ENCODE measurements at regions of chr14 and their contacts with region 1.

Region 1: GRCh38 chr14:86961106-86961716 is 1031.8 kb downstream of the GALC start:
- DNase-seq: peak; percentile 35
- ATAC-seq: peak; percentile 96
- H3K4me3 Mint-ChIP-seq: no peak overlapping the region
- H3K27ac Mint-ChIP-seq: no peak overlapping the region
- H3K4me1 Mint-ChIP-seq: no peaks in the 10 kb centered on the region
- H3K27me3 Mint-ChIP-seq: no peaks in the 10 kb centered on the region
- CTCF ChIP-seq: peak; percentile 64

Region 2: DNA sequence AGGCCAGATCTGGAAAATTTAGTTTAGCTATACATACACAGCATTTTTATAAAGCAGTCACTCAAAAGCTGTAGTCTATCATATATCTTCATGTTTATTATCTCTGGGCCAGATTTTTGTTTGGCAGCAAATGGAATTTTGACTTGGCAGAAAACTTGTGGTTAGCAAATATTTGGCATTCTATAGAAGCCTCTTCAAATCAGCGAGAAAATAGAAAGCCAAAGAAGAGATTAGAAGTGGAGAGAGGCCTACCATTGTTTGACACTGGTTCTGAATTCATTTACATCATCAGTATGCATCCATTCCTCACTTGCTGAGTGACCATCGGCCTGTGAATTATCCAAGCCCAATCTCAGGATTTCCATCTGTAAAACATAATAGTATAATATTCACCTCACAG is 45.8 kb before region 1 on chr14:
- CTCF ChIA-PET with region 1: no interaction called
- POLR2A ChIA-PET with region 1: no interaction called
- DNase-seq: no peak
- ATAC-seq: no peak
- H3K4me3 Mint-ChIP-seq: no peak overlapping the region
- H3K27ac Mint-ChIP-seq: no peak overlapping the region
- H3K4me1 Mint-ChIP-seq: no peaks in the 10 kb centered on the region
- H3K27me3 Mint-ChIP-seq: no peaks in the 10 kb centered on the region
- CTCF ChIP-seq: no peak

Region 3: DNA sequence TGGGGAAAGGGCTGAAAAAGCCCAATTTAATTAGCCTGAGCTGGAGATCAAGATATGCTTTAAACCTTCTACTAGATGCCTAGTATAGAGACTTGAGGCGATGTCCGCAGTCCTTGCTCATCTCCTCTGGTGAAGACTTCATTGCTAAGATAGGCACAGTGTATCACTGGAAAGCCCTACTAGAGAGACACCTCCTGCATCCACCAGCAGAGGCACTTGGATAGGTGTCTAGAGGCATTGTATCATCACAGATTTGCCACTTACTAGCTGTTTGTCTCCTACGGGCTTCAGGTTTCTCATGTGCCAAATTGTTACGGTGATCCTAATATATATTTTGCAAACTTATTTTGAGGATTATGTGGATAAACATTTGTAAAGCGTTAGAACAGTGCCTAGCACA is 16.8 kb before region 1 on chr14:
- CTCF ChIA-PET with region 1: no interaction called
- POLR2A ChIA-PET with region 1: no interaction called
- DNase-seq: no peak
- ATAC-seq: peak; percentile 67
- H3K4me3 Mint-ChIP-seq: no peak overlapping the region
- H3K27ac Mint-ChIP-seq: no peak overlapping the region
- H3K4me1 Mint-ChIP-seq: no peaks in the 10 kb centered on the region
- H3K27me3 Mint-ChIP-seq: no peaks in the 10 kb centered on the region
- CTCF ChIP-seq: no peak

Region 4: DNA sequence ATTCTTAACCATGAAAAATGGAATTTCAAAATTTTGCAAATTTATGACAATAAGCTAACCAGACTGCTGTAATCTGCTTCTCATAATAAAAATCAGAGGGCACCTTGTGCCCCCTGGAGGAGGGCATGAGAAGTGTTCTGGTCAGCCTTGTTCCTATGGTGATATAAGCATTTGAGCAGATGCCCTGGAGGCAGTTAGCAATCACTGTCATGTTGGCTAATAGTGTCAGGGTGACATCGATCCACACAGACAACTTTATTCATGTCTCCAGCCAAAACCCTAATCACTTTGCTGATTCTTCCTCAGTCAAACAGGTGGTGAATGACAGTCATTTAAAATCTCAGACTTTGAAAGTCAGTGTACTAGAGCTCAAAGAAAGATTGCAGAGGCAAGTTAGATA is 88.7 kb after region 1 on chr14:
- CTCF ChIA-PET with region 1: interaction called, 15 read pairs
- POLR2A ChIA-PET with region 1: no interaction called
- DNase-seq: peak; percentile 62
- ATAC-seq: peak; percentile 98
- H3K4me3 Mint-ChIP-seq: no peak overlapping the region
- H3K27ac Mint-ChIP-seq: no peak overlapping the region
- H3K4me1 Mint-ChIP-seq: peaks cover 15% of the 10 kb centered on the region
- H3K27me3 Mint-ChIP-seq: no peaks in the 10 kb centered on the region
- CTCF ChIP-seq: peak; percentile 70